ENCODE measurements at regions of chr11 and their contacts with region 1.

Region 1: GRCh38 chr11:70879601-70880285 is 372.6 kb downstream of the SHANK2 start:
- DNase-seq: no peak
- H3K4me3 ChIP-seq: no peak overlapping the region
- H3K27ac ChIP-seq: no peak overlapping the region
- H3K4me1 ChIP-seq: no peaks in the 10 kb centered on the region
- H3K27me3 ChIP-seq: no peaks in the 10 kb centered on the region
- CTCF ChIP-seq: no peak

Region 2: DNA sequence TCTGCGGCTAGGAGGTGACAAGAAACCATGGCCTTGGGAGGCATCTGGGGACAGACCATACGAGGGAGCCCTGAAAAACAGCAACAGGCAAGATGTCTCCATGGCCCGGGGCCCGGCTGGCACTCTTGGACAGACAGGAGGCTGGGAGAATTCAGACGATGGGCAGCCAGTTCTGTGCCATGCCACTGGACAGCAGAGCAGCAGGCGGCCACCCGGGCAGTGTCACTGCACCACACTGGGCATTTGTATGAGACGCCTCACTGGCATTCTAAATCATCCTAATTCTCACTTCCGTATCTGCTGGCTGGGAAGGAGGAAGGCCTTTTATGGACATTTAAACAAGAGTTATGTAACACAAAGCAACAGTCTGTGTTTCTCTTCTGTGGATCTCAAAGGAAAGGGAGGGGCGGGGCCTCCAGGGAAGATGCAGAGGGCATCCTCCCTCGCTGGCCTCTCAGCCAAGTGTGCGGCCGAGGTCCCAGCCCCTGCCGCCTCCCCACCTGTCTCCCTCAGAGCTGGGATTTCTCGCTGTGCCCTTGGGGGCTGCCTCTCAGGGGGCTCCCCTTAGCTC is 22.3 kb after region 1 on chr11:
- CTCF ChIA-PET with region 1: no interaction called
- POLR2A ChIA-PET with region 1: no interaction called
- intact Hi-C with region 1: no loop called
- DNase-seq: no peak
- H3K4me3 ChIP-seq: no peak overlapping the region
- H3K27ac ChIP-seq: no peak overlapping the region
- H3K4me1 ChIP-seq: no peaks in the 10 kb centered on the region
- H3K27me3 ChIP-seq: no peaks in the 10 kb centered on the region
- CTCF ChIP-seq: no peak

Region 3: GRCh38 chr11:72203163-72203562 is 1323.4 kb after region 1 on chr11:
- CTCF ChIA-PET with region 1: no interaction called
- POLR2A ChIA-PET with region 1: interaction called, 29 read pairs
- intact Hi-C with region 1: no loop called
- DNase-seq: peak in 1 of 2 experiments; percentile 48
- H3K4me3 ChIP-seq: no peak overlapping the region
- H3K27ac ChIP-seq: 0 out of 2 replicates have a peak overlapping the region, but pooled peaks have one; percentile 14
- H3K4me1 ChIP-seq: peaks cover 32% of the 10 kb centered on the region
- H3K27me3 ChIP-seq: no peaks in the 10 kb centered on the region
- CTCF ChIP-seq: no peak